Activated CD4-positive, alpha-beta T cell treated with anti-CD3 and anti-CD28 coated beads, Interleukin-2, amount 10 ng/mL, durations not matched to agents 7 days and 5 days (primary cell): ENCODE measurements at regions of chr14 and their contacts with region 1.

Region 1: DNA sequence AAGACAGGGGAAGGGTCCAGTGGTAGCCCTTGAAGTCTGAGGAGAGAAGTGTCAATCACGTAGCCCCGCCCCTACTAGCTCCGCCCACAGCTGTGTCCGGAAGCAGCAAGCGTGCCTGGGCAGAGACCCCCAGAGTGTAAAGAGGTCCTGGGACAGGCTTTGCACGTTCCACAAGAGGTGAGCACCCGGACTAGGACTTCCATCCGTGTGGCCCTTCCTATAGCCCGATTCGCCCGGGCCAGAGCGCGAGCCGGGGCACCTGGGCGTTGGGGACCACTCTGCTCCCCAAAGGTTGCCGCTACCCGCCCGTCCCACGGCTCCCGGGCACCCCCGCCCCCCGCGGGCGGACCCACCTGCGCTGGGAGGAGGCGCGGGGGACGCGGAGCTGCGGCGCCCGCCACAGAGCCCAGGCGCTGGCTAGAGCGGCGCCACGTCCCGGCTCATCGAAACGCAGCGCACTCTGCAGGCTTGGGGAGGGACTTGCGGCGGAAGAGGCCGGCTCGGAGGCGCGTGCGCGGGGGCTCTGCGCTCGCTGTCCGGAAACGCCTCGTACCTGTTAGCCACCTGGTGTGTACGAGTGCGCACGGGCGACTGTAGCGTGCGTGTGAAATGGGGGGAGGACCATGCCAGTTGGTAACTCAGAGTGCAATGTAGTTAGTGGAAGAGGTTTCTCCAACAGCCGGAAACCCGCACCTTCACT is at the start of gene RABGGTA:
- DNase-seq: peak; percentile 91
- H3K4me3 Mint-ChIP-seq: peak within 1 kb of the TSS; percentile 87
- H3K27ac Mint-ChIP-seq: peak within 1 kb of the TSS; percentile 96
- H3K4me1 Mint-ChIP-seq: peaks cover 52% of the 10 kb centered on the region
- H3K27me3 Mint-ChIP-seq: no peaks in the 10 kb centered on the region
- total RNA-seq, gene RABGGTA: 54.8 to 55.0 TPM

Region 2: GRCh38 chr14:24204163-24205146 is 66.8 kb before region 1 on chr14:
- CTCF ChIA-PET with region 1: no interaction called
- POLR2A ChIA-PET with region 1: no interaction called
- DNase-seq: no peak
- H3K4me3 Mint-ChIP-seq: no peak overlapping the region
- H3K27ac Mint-ChIP-seq: no peak overlapping the region
- H3K4me1 Mint-ChIP-seq: peaks cover 13% of the 10 kb centered on the region
- H3K27me3 Mint-ChIP-seq: no peaks in the 10 kb centered on the region

Region 3: GRCh38 chr14:24251880-24252288 is 19.4 kb before region 1 on chr14:
- CTCF ChIA-PET with region 1: interaction called, 29 read pairs
- POLR2A ChIA-PET with region 1: interaction called, 11 read pairs
- DNase-seq: no peak
- H3K4me3 Mint-ChIP-seq: no peak overlapping the region
- H3K27ac Mint-ChIP-seq: peak overlapping the region; percentile 28
- H3K4me1 Mint-ChIP-seq: peaks cover 43% of the 10 kb centered on the region
- H3K27me3 Mint-ChIP-seq: no peaks in the 10 kb centered on the region

Region 4: DNA sequence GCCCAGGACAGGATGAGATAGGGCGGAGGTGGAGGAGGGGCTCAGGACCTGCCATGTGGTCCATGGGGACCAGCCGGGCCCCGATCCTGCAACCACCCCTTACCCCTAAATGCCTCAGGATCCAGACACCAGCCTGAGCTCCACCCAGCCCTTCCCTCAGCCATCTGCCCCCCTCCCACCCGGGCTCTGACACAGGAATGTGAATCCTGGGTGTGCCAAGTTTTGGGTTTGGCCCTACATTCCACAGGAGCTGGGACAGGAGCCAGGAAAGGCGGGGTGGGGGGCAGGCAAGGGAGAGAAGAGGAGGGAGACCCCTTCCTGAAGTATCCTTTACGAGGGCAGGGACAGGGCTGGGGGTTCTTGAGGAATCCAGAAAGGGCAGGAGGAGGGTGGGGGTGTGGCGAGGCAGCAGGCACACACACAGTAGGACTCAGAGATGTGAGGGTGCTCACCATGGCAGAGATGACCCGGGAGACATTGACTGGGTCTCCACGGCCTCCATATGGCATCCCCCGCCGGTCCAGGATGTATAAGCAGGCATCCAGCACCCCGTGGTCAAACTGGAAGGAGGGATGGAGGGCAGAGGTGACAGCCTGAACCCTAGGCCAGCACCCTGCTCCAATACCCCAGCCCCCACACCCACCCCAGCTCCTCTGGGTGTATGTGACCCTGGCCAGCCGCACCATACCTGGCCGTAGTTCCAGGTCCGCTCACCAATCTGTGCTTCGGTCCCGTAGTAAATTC is 11.9 kb before region 1 on chr14:
- CTCF ChIA-PET with region 1: interaction called, 11 read pairs
- POLR2A ChIA-PET with region 1: interaction called, 3 read pairs
- DNase-seq: no peak
- H3K4me3 Mint-ChIP-seq: no peak overlapping the region
- H3K27ac Mint-ChIP-seq: no peak overlapping the region
- H3K4me1 Mint-ChIP-seq: no peaks in the 10 kb centered on the region
- H3K27me3 Mint-ChIP-seq: no peaks in the 10 kb centered on the region

Region 5: DNA sequence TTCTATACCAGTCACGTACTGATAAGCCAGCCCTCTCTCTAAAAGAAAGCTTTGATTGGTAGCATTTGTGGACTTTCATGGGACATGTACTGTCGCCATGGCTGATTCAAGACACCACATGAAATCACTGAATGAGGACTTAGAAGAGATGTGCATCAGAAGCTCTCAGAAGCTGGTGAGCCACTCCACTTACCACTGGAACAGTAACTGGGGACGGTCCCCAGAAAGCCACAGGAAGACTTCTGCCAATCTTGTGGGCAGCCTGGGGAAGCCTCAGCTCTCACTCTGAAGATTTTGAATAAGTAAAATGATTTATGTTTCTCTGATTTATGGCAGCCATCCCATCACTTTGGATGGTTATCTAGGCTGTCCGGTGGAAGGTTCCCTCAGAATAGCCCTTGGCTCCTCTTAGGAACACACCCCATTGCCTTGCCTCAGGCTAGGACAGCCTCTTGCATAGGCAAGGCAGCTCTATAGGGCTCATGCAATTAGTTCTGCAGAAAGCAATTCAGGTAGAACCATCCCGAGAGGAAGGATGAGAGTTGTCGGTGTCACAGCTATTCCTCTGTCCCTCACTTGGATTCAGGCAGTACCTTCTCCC is 18.5 kb after region 1 on chr14:
- CTCF ChIA-PET with region 1: interaction called, 24 read pairs
- POLR2A ChIA-PET with region 1: interaction called, 3 read pairs
- DNase-seq: peak; percentile 50
- H3K4me3 Mint-ChIP-seq: no peak overlapping the region
- H3K27ac Mint-ChIP-seq: no peak overlapping the region
- H3K4me1 Mint-ChIP-seq: peaks cover 27% of the 10 kb centered on the region
- H3K27me3 Mint-ChIP-seq: peaks cover 2% of the 10 kb centered on the region

Region 6: GRCh38 chr14:24299255-24300195 is 28.2 kb after region 1 on chr14 and contains the starts of genes DHRS1 and NOP9:
- CTCF ChIA-PET with region 1: interaction called, 18 read pairs
- POLR2A ChIA-PET with region 1: no interaction called
- DNase-seq: peak; percentile 92
- H3K4me3 Mint-ChIP-seq: peak within 1 kb of the TSS; percentile 89
- H3K27ac Mint-ChIP-seq: peak within 1 kb of the TSS; percentile 93
- H3K4me1 Mint-ChIP-seq: peaks cover 53% of the 10 kb centered on the region
- H3K27me3 Mint-ChIP-seq: no peaks in the 10 kb centered on the region
- total RNA-seq, gene DHRS1: 31.7 to 35.0 TPM
- total RNA-seq, gene NOP9: 30.8 to 35.2 TPM

Region 7: GRCh38 chr14:24339284-24340151 is 68.2 kb after region 1 on chr14 and contains the start of gene RIPK3:
- CTCF ChIA-PET with region 1: no interaction called
- POLR2A ChIA-PET with region 1: no interaction called
- DNase-seq: peak; percentile 85
- H3K4me3 Mint-ChIP-seq: peak within 1 kb of the TSS; percentile 94
- H3K27ac Mint-ChIP-seq: peak within 1 kb of the TSS; percentile 95
- H3K4me1 Mint-ChIP-seq: peaks cover 35% of the 10 kb centered on the region
- H3K27me3 Mint-ChIP-seq: peaks cover 31% of the 10 kb centered on the region
- total RNA-seq, gene RIPK3: 37.5 to 41.4 TPM